Activated CD4-positive, alpha-beta memory T cell treated with anti-CD3 and anti-CD28 coated beads, Interleukin-2, amount 10 ng/mL, durations not matched to agents 7 days and 5 days (primary cell): ENCODE measurements at regions of chr5 and their contacts with region 1.

Region 1: DNA sequence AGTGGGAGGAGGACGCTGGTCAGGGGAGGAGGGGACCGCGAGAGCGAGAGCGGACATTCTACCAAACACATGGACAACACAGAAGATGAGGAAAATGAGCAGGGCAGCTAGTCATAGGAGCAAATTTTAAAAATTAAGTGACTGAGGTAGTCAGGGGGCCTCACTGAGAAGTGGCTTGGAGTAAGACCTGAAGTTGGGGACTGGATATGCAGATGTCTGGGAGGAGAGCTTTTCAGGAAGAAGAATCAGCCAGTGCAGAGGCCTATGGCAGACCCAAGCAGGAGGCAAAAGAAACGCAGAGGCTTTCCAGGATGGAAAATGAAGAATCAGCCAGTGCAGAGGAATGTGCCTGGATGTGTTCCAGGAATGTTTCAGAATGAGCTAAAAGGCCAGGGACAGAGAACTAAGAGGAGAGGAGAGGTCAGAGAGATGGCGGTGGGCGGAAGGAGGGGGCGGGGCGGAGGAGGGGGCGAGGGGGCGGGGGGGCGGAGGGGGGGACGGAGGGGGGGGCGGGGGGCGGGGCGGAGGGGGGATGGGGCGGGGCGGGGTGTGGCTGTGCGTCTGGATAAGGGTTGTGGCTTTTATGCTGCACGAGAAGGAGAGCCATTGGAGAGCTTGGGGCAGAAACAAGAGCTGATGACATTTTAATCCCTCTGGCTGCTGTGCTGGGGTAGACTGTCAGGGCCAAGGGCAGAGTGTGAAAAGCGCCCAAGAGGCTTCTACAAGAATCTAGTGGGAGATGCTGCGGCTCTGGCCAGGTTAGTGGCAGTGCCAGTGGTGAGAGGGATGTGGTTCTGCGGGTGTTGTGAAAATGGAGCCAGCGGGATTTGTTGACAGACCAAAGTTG is 129.6 kb downstream of the KCNIP1 start:
- DNase-seq: no peak
- H3K4me3 Mint-ChIP-seq: no peak overlapping the region
- H3K27ac Mint-ChIP-seq: no peak overlapping the region
- H3K4me1 Mint-ChIP-seq: peaks cover 11% of the 10 kb centered on the region
- H3K27me3 Mint-ChIP-seq: peaks cover 16% of the 10 kb centered on the region

Region 2: DNA sequence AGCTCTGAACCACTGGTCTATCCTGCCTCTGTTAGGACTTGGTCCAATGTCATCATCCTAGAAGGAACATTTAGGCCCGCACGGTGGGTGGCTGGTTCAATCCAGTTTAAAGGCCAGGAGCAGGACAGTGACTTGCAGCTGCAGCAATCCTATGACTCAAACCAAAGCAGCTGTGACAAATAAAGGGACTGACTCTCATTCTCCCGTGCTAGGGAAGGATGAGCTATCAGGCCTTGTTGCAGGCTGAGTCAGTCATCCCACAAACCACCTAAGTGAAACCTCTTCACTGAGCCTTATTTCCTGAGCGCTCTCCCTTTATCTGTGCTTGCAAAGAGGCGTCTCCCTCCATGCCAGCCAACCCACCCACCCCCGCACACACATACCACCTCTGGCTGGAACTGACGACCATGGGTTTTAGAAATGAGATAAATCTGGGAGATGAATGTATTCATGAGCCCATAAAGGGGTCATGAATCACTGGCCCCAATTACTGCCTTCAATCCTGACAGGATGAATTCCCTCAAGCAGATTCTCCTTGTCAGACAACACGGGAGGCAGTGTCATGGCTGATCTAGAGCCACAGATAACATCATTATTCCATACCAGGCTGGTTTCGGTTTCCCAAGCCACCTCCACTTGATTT is 36.2 kb before region 1 on chr5:
- CTCF ChIA-PET with region 1: interaction called, 30 read pairs
- POLR2A ChIA-PET with region 1: no interaction called
- DNase-seq: peak; percentile 35
- H3K4me3 Mint-ChIP-seq: no peak overlapping the region
- H3K27ac Mint-ChIP-seq: no peak overlapping the region
- H3K4me1 Mint-ChIP-seq: peaks cover 30% of the 10 kb centered on the region
- H3K27me3 Mint-ChIP-seq: peaks cover 33% of the 10 kb centered on the region

Region 3: DNA sequence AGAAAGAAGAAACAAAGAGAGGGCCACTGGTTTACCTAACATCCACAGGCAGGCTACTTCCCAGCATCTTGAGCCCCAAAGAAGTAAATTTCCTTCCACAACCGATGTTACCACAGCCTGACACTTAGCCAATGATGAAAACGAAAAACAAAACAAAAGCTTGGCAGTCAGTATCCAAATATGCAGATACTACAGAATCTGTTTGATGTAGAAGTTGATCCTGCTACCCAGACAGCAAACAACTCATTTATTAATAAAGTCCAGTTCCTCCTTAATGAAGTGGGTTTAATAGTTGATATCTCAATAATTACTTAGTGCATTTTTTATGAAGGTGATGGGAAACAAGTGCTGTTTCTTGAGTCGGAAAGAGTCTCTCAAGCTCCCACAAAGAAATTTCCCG is 82.9 kb after region 1 on chr5:
- CTCF ChIA-PET with region 1: no interaction called
- POLR2A ChIA-PET with region 1: no interaction called
- DNase-seq: no peak
- H3K4me3 Mint-ChIP-seq: no peak overlapping the region
- H3K27ac Mint-ChIP-seq: no peak overlapping the region
- H3K4me1 Mint-ChIP-seq: no peaks in the 10 kb centered on the region
- H3K27me3 Mint-ChIP-seq: peaks cover 9% of the 10 kb centered on the region